MCF 10A (cell line): ENCODE measurements at regions of chr14 and their contacts with region 1.

Region 1: GRCh38 chr14:33647385-33647786 is 303.5 kb downstream of the EGLN3 start:
- DNase-seq: peak; percentile 95
- H3K4me3 Mint-ChIP-seq: no peak overlapping the region
- H3K27ac Mint-ChIP-seq: peak overlapping the region; percentile 82
- H3K4me1 Mint-ChIP-seq: peaks cover 27% of the 10 kb centered on the region
- H3K27me3 Mint-ChIP-seq: no peaks in the 10 kb centered on the region
- CTCF ChIP-seq: no peak

Region 2: DNA sequence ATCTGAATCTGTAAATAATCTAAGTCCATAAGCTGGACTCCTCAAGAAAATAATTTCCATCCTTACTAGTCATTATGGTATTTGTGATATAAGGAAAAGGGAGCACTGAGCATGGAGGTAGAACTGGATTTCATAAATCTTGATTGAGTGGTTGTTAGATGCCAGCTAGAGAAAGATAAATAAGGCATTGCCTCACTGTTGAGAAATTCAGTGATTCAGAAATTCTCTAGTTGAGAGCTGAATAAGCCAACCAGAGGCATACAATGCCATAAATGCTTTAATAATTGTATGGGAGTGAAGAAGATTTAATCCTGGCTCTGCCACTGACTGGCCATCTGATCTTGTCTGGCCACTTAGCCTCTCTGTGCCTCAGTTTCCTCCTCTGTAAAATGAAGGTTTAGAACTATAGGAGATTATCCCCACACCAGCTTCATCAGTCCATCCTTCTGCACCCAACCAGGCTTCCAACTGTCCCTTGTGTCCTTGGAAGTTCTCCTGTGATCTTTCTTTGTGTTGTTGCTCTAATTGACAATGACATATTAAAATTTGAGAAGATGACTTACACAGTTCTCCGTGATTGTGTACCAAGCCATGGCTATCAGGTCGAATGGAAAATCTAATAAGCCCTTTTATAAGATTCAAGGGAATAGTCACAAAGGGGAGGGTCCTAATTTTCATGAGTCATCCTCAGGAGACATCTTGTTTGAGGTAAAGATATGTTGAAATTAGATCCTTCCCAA is 90.8 kb before region 1 on chr14:
- CTCF ChIA-PET with region 1: no interaction called
- POLR2A ChIA-PET with region 1: no interaction called
- intact Hi-C with region 1: loop called (anchors 5 kb)
- DNase-seq: peak; percentile 83
- H3K4me3 Mint-ChIP-seq: no peak overlapping the region
- H3K27ac Mint-ChIP-seq: peak overlapping the region; percentile 72
- H3K4me1 Mint-ChIP-seq: peaks cover 16% of the 10 kb centered on the region
- H3K27me3 Mint-ChIP-seq: no peaks in the 10 kb centered on the region
- CTCF ChIP-seq: no peak